Endothelial cell of umbilical vein (primary cell): ENCODE measurements at regions of chr3 and their contacts with region 1.

Region 1: GRCh38 chr3:39038165-39038564 is 13.6 kb downstream of the SCN11A start:
- DNase-seq: no peak
- H3K4me3 ChIP-seq: no peak overlapping the region
- H3K27ac ChIP-seq: no peak overlapping the region
- H3K4me1 ChIP-seq: no peaks in the 10 kb centered on the region
- H3K27me3 ChIP-seq: peaks cover 0 to 6% of the 10 kb centered on the region in 2 experiments
- CTCF ChIP-seq: no peak
- POLR2A ChIP-seq: no peak

Region 2: DNA sequence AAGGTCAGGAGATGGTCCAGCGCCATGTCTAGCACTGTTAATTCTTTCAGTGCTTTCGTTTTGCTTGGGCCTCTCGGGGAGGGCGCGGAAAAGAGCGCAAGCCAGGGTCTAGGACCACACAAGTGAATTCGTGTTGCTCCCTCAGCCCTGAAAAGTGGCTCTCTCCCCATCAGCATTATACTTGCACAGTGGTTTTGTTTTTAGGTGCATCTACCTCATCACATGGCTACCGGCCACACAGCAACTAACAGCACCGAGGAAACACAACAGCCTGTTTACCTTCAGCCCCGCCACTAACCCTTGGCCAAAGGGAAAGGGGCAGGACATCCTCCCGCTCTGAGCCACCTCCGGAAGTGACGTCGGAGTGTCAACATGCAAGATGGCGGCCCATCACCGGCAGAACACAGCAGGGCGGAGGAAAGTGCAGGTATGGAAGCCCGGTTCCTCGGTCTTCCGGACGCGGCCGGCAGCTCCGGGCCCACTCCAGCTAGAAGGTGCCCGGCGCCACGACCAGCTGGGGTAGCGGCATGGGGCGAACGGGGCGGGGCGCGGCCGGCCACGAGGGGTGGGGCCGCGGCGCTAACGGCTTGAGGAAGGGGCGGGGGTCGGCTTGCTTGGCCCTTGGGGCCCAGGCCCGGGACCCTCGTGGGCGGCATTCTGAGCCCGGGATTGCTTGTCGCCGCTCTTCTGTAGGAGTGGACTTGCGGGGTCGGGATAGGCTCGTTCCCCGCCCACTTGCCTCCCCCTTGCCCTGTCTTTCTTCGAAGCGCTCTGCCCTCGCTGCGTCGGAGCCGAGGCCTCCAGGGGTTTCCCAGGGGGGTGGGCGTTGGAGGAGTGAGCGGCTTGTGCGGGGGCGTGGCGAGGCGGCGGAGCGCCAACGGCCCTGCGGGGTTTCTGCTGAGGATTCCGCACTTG is 13.7 kb after region 1 on chr3 and contains the starts of genes SCN11A and WDR48:
- CTCF ChIA-PET with region 1: no interaction called
- POLR2A ChIA-PET with region 1: no interaction called
- dilution Hi-C with region 1: no loop called
- intact Hi-C with region 1: loop called (anchors 1 kb)
- DNase-seq: peak; percentile 92
- H3K4me3 ChIP-seq: peak within 1 kb of the TSS; percentile 54 to 96 (median 80)
- H3K27ac ChIP-seq: peak within 1 kb of the TSS; percentile 58
- H3K4me1 ChIP-seq: peaks cover 6% of the 10 kb centered on the region
- H3K27me3 ChIP-seq: peaks cover 4% of the 10 kb centered on the region in 2 experiments
- CTCF ChIP-seq: no peak
- POLR2A ChIP-seq: peak; percentile 81
- total RNA-seq, gene SCN11A: 0.07 TPM in 1 of 2 replicates, not detected in the other
- total RNA-seq, gene WDR48: 25.3 and 31.2 TPM in 2 replicates

Region 3: GRCh38 chr3:39118079-39118478 is 79.9 kb after region 1 on chr3:
- CTCF ChIA-PET with region 1: no interaction called
- POLR2A ChIA-PET with region 1: no interaction called
- dilution Hi-C with region 1: no loop called
- intact Hi-C with region 1: no loop called
- DNase-seq: no peak
- H3K4me3 ChIP-seq: no peak overlapping the region
- H3K27ac ChIP-seq: no peak overlapping the region
- H3K4me1 ChIP-seq: no peaks in the 10 kb centered on the region
- H3K27me3 ChIP-seq: no peaks in the 10 kb centered on the region
- CTCF ChIP-seq: no peak
- POLR2A ChIP-seq: no peak